ENCODE measurements at regions of chr1 and their contacts with region 1.

Region 1: GRCh38 chr1:160193091-160193819 is 2.9 kb downstream of the CASQ1 start:
- DNase-seq: peak; percentile 69
- ATAC-seq: peak; percentile 92
- H3K4me3 ChIP-seq: peak overlapping the region in 1 of 2 experiments; percentile 11; a peak in 1 of 4 replicates
- H3K27ac ChIP-seq: no peak overlapping the region
- H3K4me1 ChIP-seq: peaks cover 7% of the 10 kb centered on the region; the same call in 1 of the 2 replicates
- H3K27me3 ChIP-seq: no peaks in the 10 kb centered on the region
- CTCF ChIP-seq: peak; percentile 96

Region 2: GRCh38 chr1:160219062-160219929 is 26.0 kb after region 1 on chr1:
- CTCF ChIA-PET with region 1: interaction called, 18 read pairs
- POLR2A ChIA-PET with region 1: no interaction called
- in situ Hi-C with region 1: no loop called
- intact Hi-C with region 1: loop called (anchors 1 kb)
- DNase-seq: peak; percentile 10
- ATAC-seq: peak; percentile 79
- H3K4me3 ChIP-seq: no peak overlapping the region
- H3K27ac ChIP-seq: no peak overlapping the region
- H3K4me1 ChIP-seq: no peaks in the 10 kb centered on the region
- H3K27me3 ChIP-seq: no peaks in the 10 kb centered on the region
- CTCF ChIP-seq: peak; percentile 68

Region 3: GRCh38 chr1:160251687-160252526 is 58.7 kb after region 1 on chr1:
- CTCF ChIA-PET with region 1: interaction called, 8 read pairs
- POLR2A ChIA-PET with region 1: no interaction called
- in situ Hi-C with region 1: no loop called
- intact Hi-C with region 1: loop called (anchors 2 kb)
- DNase-seq: no peak
- ATAC-seq: peak; percentile 97
- H3K4me3 ChIP-seq: no peak overlapping the region
- H3K27ac ChIP-seq: no peak overlapping the region
- H3K4me1 ChIP-seq: no peaks in the 10 kb centered on the region
- H3K27me3 ChIP-seq: no peaks in the 10 kb centered on the region
- CTCF ChIP-seq: peak; percentile 74

Region 4: DNA sequence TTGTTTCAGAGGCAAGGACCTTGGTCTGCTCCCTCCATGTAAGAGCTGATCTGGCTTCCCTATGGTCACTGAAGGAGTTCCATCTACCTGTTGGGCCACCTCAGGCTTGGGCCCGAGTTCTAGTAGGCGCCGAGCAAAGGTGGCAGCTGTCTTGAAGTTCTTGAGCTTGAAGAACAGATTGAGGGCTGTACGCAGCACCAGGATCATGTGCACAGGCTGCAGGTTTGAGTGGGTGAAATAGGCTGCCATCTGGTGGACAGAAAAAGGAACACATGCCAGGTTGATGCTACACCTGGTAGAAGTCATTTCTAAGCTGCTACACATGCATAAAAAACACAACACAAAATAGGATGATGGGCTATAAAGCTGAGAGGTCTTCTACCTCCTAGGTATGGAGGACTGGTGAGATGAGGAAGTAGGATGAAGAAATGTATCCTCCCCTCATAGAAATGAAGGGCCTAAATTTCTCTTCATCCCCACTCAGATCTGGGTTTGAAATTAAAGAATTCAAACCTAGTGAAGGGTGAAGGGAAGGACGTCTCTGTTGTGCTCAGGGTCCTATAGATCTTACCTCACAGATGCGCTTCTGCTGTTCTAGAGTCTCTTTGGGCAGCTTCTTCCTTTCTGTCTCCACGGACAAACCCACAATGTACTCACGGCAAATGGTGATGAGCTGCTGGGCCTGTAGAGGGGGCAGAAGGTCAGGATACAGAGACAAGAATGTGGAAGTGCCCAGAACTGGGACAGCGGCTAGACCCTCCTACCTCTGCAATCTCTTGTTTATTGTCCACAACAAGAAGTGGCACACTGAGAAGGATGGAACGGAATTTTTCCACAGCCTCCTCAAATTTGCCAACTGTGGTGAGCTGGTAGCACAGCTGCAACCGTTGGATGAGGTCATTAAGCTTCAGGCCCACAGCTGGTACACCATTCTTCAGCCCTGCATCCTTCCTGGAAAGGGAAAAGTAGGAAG is 98.3 kb after region 1 on chr1:
- CTCF ChIA-PET with region 1: interaction called, 13 read pairs
- POLR2A ChIA-PET with region 1: interaction called, 4 read pairs
- in situ Hi-C with region 1: no loop called
- intact Hi-C with region 1: loop called (anchors 1 kb)
- DNase-seq: peak; percentile 63
- ATAC-seq: peak; percentile 94
- H3K4me3 ChIP-seq: no peak overlapping the region
- H3K27ac ChIP-seq: no peak overlapping the region
- H3K4me1 ChIP-seq: no peaks in the 10 kb centered on the region
- H3K27me3 ChIP-seq: no peaks in the 10 kb centered on the region
- CTCF ChIP-seq: peak; percentile 89

Measured in Panc1 (cell line).